Kidney (tissue), 22 donors: ENCODE measurements at regions of chr5 and their contacts with region 1.

Region 1: DNA sequence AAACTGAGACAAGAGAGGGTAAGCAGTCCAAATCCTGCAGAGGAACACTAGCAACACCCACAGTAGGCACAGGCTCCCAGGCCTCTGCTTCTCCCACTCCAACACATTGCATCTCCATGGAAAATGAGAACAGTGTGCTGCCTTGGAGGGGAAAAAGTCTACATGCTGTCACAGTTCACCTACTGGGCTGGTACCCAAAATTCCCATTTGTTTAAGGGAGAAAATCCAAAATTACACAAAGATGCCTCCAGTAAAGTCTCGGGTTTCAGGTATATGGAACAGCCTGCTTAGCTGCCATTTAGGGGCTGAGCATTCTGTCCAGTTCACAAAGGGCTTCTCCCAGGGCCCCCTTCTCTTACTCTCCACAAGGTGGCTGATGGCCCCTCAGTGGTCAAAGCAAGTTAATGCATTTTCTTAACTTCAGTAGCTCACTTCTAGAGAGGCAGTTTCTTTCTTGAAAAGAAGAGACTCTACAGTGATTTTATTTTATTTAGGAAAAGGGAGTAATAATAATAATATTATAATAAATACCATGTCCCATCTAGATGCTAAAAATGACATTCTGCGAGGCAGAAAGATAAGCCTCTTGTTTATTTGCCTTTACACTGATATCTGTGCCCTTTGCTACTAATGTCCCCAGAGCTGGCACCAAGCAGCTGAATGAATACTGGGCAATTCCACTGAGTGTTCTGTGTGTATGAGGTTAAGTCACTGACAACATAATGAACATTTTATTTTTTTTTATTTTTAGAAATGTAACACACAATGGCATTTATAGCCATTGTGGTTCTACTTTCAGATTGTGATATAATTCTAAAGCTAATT is 89.4 kb downstream of the RGS7BP start:
- DNase-seq: peak in 2 of 5 donors; percentile 19 to 45
- H3K4me3 ChIP-seq: no peak overlapping the region
- H3K27ac ChIP-seq: no peak overlapping the region
- H3K4me1 ChIP-seq: no peaks in the 10 kb centered on the region
- H3K27me3 ChIP-seq: no peaks in the 10 kb centered on the region
- CTCF ChIP-seq: peak; percentile 27

Region 2: GRCh38 chr5:64518809-64519208 is 76.4 kb before region 1 on chr5:
- intact Hi-C with region 1: loop called (anchors 10 kb)
- DNase-seq: no peak
- H3K4me3 ChIP-seq: no peak overlapping the region
- H3K27ac ChIP-seq: no peak overlapping the region
- H3K4me1 ChIP-seq: no peaks in the 10 kb centered on the region
- H3K27me3 ChIP-seq: no peaks in the 10 kb centered on the region
- CTCF ChIP-seq: no peak

Region 3: GRCh38 chr5:65076251-65076869 is 481.1 kb after region 1 on chr5:
- intact Hi-C with region 1: no loop called
- DNase-seq: no peak
- H3K4me3 ChIP-seq: no peak overlapping the region
- H3K27ac ChIP-seq: no peak overlapping the region
- H3K4me1 ChIP-seq: no peaks in the 10 kb centered on the region
- H3K27me3 ChIP-seq: no peaks in the 10 kb centered on the region
- CTCF ChIP-seq: no peak

Region 4: GRCh38 chr5:65190328-65191053 is 595.2 kb after region 1 on chr5:
- intact Hi-C with region 1: no loop called
- DNase-seq: no peak
- H3K4me3 ChIP-seq: no peak overlapping the region
- H3K27ac ChIP-seq: no peak overlapping the region
- H3K4me1 ChIP-seq: no peaks in the 10 kb centered on the region
- H3K27me3 ChIP-seq: no peaks in the 10 kb centered on the region
- CTCF ChIP-seq: no peak